PC-3 (cell line): ENCODE measurements at regions of chr22 and their contacts with region 1.

Region 1: GRCh38 chr22:36409911-36410756 is 22.4 kb upstream of the MYH9 start:
- DNase-seq: peak; percentile 97
- ATAC-seq: peak; percentile 94
- H3K4me3 ChIP-seq: peak overlapping the region; percentile 43
- H3K27ac ChIP-seq: peak overlapping the region; percentile 84
- H3K4me1 ChIP-seq: peaks cover 25% of the 10 kb centered on the region
- H3K27me3 ChIP-seq: no peaks in the 10 kb centered on the region
- CTCF ChIP-seq: no peak

Region 2: DNA sequence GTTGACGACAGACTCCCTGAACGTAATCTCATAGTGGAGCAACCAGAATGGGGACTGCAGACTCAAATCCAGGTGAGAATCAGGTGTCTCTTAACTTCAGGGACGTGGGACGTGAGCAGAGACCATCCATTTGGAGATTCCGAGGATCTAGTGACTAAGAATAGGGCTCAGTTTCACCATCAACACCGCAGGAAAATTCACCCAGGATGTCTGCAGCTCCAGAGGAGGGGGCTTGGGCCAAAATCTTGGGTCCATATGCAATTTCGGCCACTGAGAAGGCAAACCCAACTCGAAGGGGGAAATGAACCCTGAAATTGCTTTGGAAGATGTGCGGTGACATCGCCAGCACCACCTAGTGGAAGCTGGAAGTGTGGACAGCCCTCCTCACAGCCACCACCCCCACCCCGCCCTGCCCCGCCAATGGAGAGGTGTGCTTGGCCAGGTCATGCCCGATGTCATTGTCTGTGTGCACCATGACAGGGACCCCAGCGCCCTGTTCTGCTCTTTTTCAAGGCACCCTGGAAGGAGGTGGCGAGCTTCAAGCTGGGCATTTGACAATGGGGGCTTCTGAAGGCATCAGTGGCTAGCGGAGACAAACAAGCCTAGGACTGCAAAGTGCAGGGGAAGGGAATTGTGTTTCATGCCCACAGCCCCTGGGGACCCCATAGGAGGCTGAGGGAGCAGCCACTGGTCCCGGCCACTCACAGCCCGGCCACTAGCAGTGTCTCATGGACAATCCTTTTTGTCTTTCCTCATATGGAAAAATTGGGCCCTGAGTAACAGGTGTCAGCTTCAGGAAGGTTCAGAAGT is 132.4 kb before region 1 on chr22:
- CTCF ChIA-PET with region 1: no interaction called
- POLR2A ChIA-PET with region 1: interaction called, 10 read pairs
- intact Hi-C with region 1: no loop called
- DNase-seq: peak; percentile 50
- ATAC-seq: peak; percentile 82
- H3K4me3 ChIP-seq: no peak overlapping the region
- H3K27ac ChIP-seq: no peak overlapping the region
- H3K4me1 ChIP-seq: no peaks in the 10 kb centered on the region
- H3K27me3 ChIP-seq: no peaks in the 10 kb centered on the region
- CTCF ChIP-seq: peak; percentile 60

Region 3: DNA sequence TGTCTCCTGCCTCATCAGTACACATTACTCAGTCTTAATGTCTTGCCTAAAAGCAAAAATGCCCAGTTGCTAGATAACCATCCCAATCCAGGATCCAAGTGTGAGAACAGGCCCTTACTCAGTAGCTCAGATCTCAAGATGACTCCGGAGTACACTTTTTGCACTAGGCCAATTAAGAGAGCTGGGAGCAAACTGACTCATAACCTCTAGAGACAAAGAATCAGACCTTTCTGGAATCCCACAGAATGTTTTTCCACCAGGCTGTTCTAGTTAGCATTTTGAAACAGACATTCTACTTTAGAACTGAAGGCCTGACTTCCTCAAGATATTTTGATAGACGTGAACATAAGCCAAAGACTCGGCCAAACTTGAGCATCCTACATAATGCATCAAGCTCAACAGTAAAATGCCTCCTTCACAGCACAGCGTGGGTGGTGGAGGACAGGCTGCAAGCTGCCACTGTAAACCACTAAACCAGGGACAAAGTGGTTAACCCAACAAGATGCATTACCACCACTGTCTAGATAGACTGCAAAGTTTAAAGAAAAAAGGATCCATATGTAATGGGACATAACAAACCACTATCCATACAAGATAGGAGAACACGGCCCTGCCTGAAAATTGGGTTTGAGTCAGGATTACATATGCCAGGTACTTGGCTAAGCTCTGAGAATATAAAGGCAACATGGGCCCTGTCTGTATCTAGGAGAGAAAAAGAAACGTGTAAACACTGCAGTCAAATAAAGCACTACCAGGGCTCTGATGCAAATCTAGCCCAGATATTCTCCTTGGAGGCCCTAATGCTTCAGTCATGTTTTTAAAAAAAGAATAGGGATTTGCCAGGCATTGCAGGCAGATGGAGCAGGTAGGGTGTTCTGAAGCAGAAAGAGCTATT is 70.7 kb before region 1 on chr22:
- CTCF ChIA-PET with region 1: no interaction called
- POLR2A ChIA-PET with region 1: no interaction called
- intact Hi-C with region 1: no loop called
- DNase-seq: no peak
- ATAC-seq: no peak
- H3K4me3 ChIP-seq: no peak overlapping the region
- H3K27ac ChIP-seq: no peak overlapping the region
- H3K4me1 ChIP-seq: peaks cover 14% of the 10 kb centered on the region
- H3K27me3 ChIP-seq: no peaks in the 10 kb centered on the region
- CTCF ChIP-seq: no peak